ENCODE measurements at regions of chr16 and their contacts with region 1.

Region 1: GRCh38 chr16:69482410-69482991 is 58.1 kb downstream of the CYB5B start:
- DNase-seq: peak; percentile 84 to 85
- ATAC-seq: peak; percentile 88
- H3K4me3 ChIP-seq: no peak overlapping the region
- H3K27ac ChIP-seq: peak overlapping the region in 1 of 2 donors; percentile 87
- H3K4me1 ChIP-seq: no peaks in the 10 kb centered on the region
- H3K27me3 ChIP-seq: no peaks in the 10 kb centered on the region

Region 2: DNA sequence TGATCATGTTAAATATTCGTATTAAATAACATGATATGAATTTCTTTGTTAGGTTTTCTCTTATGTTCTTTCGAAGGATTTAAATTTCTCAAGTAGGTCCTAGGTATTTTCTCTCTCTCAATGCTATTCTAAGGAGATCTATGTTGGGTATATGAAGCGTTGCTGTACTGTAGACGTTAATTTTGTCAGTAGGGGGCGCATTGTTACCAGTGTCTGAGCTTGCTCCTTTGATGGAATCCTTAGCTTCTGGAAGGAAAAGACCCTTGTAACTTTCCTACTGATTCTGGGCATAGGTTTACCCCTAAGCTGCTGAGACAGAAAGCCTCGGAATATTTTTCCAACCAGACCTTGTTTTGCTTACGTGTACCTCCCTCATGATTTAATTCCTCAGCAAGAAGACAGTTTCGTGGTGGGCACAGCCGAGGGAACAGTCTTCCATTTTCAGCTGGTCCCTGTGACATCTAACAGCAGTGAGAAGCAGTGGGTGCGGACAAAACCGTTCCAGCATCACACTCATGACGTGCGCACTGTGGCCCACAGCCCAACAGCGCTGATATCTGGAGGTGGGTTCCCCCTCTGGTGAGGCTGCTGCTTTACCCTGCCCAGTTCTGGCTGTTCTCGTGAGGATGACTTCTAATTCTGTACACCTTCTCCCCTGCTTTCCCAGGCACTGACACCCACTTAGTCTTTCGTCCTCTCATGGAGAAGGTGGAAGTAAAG is 332.2 kb before region 1 on chr16:
- intact Hi-C with region 1: no loop called
- DNase-seq: no peak
- ATAC-seq: peak; percentile 83
- H3K4me3 ChIP-seq: no peak overlapping the region
- H3K27ac ChIP-seq: no peak overlapping the region
- H3K4me1 ChIP-seq: no peaks in the 10 kb centered on the region
- H3K27me3 ChIP-seq: no peaks in the 10 kb centered on the region

Region 3: GRCh38 chr16:69396187-69397061 is 86.1 kb before region 1 on chr16:
- intact Hi-C with region 1: loop called in 1 of 2 experiments (anchors 10 kb)
- DNase-seq: peak in 1 of 2 donors; percentile 70
- ATAC-seq: peak; percentile 88
- H3K4me3 ChIP-seq: no peak overlapping the region
- H3K27ac ChIP-seq: peak overlapping the region in 1 of 2 donors; percentile 79
- H3K4me1 ChIP-seq: no peaks in the 10 kb centered on the region
- H3K27me3 ChIP-seq: no peaks in the 10 kb centered on the region

Region 4: DNA sequence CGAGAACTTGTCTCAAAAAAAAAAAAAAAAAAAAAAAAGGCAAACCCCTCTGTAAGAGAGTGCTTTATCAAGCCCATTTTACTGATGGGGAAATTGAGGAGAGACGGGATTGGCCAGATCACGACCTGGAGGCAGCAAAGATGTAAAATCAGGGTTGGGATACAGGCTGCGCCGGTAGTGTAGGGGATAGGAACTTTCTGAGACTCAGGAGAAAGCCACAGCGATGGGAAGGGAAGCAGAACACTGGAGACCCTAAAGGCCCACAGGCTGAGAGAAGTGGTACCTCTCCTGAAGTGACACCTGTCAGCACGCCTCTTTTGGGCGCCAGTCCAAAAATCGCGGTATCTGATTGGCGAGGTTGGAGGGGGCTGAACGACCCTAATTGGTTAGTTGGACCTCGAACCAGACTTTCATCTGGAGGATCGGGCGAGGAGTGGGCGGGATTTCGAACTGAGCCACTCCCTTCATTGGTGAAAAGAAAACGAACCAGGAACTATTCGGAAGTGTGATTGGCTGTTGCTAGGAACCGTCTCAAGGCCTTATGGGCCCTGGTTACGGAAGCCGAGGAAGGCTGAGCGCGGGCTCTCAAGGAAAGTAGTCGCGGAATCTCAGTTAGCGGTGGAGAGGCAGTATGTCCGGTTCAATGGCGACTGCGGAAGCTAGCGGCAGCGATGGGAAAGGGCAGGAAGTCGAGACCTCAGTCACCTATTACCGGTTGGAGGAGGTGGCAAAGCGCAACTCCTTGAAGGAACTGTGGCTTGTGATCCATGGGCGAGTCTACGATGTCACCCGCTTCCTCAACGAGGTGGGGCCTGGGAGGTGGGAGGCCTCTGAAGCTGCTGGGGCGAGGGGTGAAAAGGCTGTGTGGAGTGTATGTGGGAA is 58.2 kb before region 1 on chr16 and contains the start of gene CYB5B:
- intact Hi-C with region 1: loop called in 1 of 2 experiments (anchors 1 kb)
- DNase-seq: peak; percentile 95 to 96
- ATAC-seq: peak; percentile 98
- H3K4me3 ChIP-seq: peak within 1 kb of the TSS; percentile 79 to 84
- H3K27ac ChIP-seq: peak within 1 kb of the TSS in 1 of 2 donors; percentile 30
- H3K4me1 ChIP-seq: no peaks in the 10 kb centered on the region
- H3K27me3 ChIP-seq: no peaks in the 10 kb centered on the region
- total RNA-seq, gene CYB5B: 45.8 to 55.0 TPM

Region 5: GRCh38 chr16:69565671-69566239 is 83.3 kb after region 1 on chr16 and contains the start of gene NFAT5:
- intact Hi-C with region 1: loop called (anchors 1 to 10 kb)
- DNase-seq: peak; percentile 89 to 93
- ATAC-seq: peak; percentile 98
- H3K4me3 ChIP-seq: peak within 1 kb of the TSS; percentile 92 to 99
- H3K27ac ChIP-seq: peak within 1 kb of the TSS; percentile 96 to 98
- H3K4me1 ChIP-seq: no peaks in the 10 kb centered on the region
- H3K27me3 ChIP-seq: no peaks in the 10 kb centered on the region
- total RNA-seq, gene NFAT5: 67.8 to 94.6 TPM

Measured in aorta (tissue), 5 donors.